Panc1 (cell line): ENCODE measurements at regions of chr7 and their contacts with region 1.

Region 1: GRCh38 chr7:22094413-22095342 is 149.0 kb upstream of the CDCA7L start:
- DNase-seq: no peak
- ATAC-seq: no peak
- H3K4me3 ChIP-seq: no peak overlapping the region
- H3K27ac ChIP-seq: no peak overlapping the region
- H3K4me1 ChIP-seq: no peaks in the 10 kb centered on the region
- H3K27me3 ChIP-seq: peaks cover 10% of the 10 kb centered on the region; the same call in 1 of the 2 replicates
- CTCF ChIP-seq: no peak

Region 2: GRCh38 chr7:21557661-21558060 is 537.0 kb before region 1 on chr7:
- CTCF ChIA-PET with region 1: no interaction called
- POLR2A ChIA-PET with region 1: no interaction called
- in situ Hi-C with region 1: no loop called
- intact Hi-C with region 1: no loop called
- DNase-seq: no peak
- ATAC-seq: no peak
- H3K4me3 ChIP-seq: no peak overlapping the region
- H3K27ac ChIP-seq: no peak overlapping the region
- H3K4me1 ChIP-seq: no peaks in the 10 kb centered on the region
- H3K27me3 ChIP-seq: no peaks in the 10 kb centered on the region
- CTCF ChIP-seq: no peak

Region 3: DNA sequence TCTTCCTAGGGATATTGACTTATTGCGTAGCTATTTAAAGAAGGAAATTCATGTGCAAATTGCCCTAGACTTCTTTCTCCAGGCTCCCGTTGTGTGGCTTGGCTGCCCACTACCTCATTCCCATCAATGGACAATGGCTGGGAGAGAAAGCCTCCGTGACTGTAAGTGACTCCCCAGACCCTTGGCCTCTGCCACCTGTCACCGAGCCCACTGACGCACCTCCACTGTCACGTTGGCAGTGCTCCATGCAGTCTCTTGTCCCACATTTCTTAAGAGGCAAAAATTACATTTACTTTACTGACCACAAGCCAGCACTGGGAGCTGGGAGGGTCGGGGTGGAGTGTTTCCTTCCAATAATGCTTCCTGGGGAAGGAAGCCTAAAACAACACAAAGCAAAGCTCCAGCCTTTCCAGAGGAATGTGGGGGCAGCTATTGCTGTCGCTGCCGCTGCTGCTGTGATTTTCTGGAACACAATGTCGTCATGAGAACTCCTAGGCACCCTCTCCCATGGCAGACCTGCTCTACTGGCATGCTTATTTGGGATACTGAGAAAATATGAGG is 495.0 kb after region 1 on chr7:
- CTCF ChIA-PET with region 1: no interaction called
- POLR2A ChIA-PET with region 1: interaction called, 13 read pairs
- in situ Hi-C with region 1: no loop called
- intact Hi-C with region 1: no loop called
- DNase-seq: no peak
- ATAC-seq: no peak
- H3K4me3 ChIP-seq: no peak overlapping the region
- H3K27ac ChIP-seq: no peak overlapping the region
- H3K4me1 ChIP-seq: no peaks in the 10 kb centered on the region
- H3K27me3 ChIP-seq: no peaks in the 10 kb centered on the region
- CTCF ChIP-seq: no peak